B cell (primary cell): ENCODE measurements at regions of chr3 and their contacts with region 1.

Region 1: GRCh38 chr3:39051647-39052561 is at the starts of genes SCN11A and WDR48:
- DNase-seq: peak; percentile 94
- ATAC-seq: peak; percentile 94
- H3K4me3 ChIP-seq: peak within 1 kb of the TSS; percentile 72 to 93 (median 87)
- H3K4me3 Mint-ChIP-seq: peak within 1 kb of the TSS; percentile 97
- H3K27ac ChIP-seq: peak within 1 kb of the TSS; percentile 87 to 98
- H3K27ac Mint-ChIP-seq: peak within 1 kb of the TSS; percentile 98
- H3K4me1 ChIP-seq: peaks cover 11 to 15% of the 10 kb centered on the region in 2 donors
- H3K4me1 Mint-ChIP-seq: peaks cover 44% of the 10 kb centered on the region
- H3K27me3 ChIP-seq: no peaks in the 10 kb centered on the region
- H3K27me3 Mint-ChIP-seq: no peaks in the 10 kb centered on the region
- CTCF ChIP-seq: no peak
- total RNA-seq, gene SCN11A: 0.24 and 0.25 TPM in 2 replicates
- total RNA-seq, gene WDR48: 67.6 and 68.6 TPM in 2 replicates

Region 2: DNA sequence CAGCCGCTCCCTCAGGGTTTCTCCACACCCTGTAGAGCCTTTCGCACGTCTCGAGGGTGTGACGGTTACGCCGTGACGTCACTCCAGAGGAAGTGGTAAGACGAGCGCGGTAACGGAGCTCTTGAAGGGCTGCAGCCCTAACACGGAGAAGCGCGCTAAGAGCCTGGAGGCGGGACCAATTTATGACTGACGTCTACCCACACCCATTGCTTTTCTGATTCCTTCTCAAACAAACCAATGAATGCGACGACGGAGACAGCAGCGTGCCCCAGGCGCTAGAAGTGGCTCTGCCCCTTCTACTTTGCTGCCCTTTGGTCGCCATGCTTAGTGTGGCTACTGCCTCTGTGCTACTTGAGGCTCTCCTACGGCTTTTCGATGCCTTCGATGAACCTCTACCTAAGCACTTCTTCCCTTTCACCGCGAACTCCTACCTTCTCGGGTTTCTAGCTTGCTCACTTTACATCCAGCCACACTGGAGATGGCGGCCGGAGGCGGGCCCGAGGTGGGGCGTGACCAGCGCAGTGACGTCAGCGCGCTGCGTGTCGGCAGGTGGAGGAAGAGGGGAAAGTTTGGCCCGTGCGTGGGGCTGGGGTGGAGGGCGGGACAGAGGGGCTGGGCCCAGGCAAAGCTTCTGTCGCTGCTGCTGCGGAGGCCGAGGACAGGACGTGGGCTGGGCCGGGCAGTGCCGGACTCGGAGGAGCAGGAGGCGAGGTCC is 886.8 kb before region 1 on chr3 and contains the start of gene OXSR1:
- CTCF ChIA-PET with region 1: no interaction called
- POLR2A ChIA-PET with region 1: interaction called, 3 read pairs
- intact Hi-C with region 1: loop called (anchors 10 kb)
- DNase-seq: peak; percentile 99
- ATAC-seq: peak; percentile 89
- H3K4me3 ChIP-seq: peak within 1 kb of the TSS; percentile 64 to 97 (median 85)
- H3K4me3 Mint-ChIP-seq: peak within 1 kb of the TSS; percentile 94
- H3K27ac ChIP-seq: peak within 1 kb of the TSS; percentile 98 to 100
- H3K27ac Mint-ChIP-seq: peak within 1 kb of the TSS; percentile 100
- H3K4me1 ChIP-seq: peaks cover 21 to 28% of the 10 kb centered on the region in 2 donors
- H3K4me1 Mint-ChIP-seq: peaks cover 50% of the 10 kb centered on the region
- H3K27me3 ChIP-seq: no peaks in the 10 kb centered on the region
- H3K27me3 Mint-ChIP-seq: no peaks in the 10 kb centered on the region
- CTCF ChIP-seq: no peak
- total RNA-seq, gene OXSR1: 37.9 and 41.5 TPM in 2 replicates

Region 3: DNA sequence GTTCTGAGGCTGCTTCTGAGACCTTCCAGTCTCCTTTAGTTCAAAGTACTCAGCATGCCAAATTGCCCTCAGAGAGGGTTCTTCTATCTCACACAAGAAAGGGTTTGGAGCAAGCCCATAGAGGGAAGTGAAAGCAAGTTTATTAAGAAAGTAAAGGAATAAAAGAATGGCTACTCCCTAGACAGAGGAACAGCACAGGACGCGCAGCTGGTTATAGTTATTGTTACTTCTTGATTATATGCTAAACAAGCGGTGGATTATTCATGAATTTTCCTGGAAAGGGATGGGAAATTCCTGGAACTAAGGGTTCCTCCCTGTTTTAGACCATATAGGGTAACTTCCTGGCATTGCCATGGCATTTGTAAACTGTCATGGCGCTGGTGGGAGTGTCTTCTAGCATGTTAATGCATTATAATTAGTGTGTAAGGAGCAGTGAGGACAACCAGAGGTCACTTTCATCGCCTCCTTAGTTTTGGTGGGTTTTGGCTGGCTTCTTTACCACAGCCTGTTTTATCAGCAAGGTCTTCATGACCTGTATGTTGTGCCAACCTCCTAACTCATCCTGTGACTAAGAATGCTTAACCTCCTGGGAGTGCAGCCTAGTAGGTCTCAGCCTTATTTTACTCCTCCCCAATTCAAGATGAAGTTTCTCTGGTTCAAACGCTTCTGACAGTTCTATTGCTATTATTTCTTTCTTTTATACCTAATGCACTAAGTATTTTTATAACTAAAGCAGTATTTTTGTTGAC is 26.5 kb before region 1 on chr3:
- CTCF ChIA-PET with region 1: no interaction called
- POLR2A ChIA-PET with region 1: no interaction called
- intact Hi-C with region 1: no loop called
- DNase-seq: no peak
- ATAC-seq: no peak
- H3K4me3 ChIP-seq: no peak overlapping the region
- H3K4me3 Mint-ChIP-seq: no peak overlapping the region
- H3K27ac ChIP-seq: no peak overlapping the region
- H3K27ac Mint-ChIP-seq: no peak overlapping the region
- H3K4me1 ChIP-seq: no peaks in the 10 kb centered on the region
- H3K4me1 Mint-ChIP-seq: no peaks in the 10 kb centered on the region
- H3K27me3 ChIP-seq: no peaks in the 10 kb centered on the region
- H3K27me3 Mint-ChIP-seq: peaks cover 12% of the 10 kb centered on the region
- CTCF ChIP-seq: no peak

Region 4: DNA sequence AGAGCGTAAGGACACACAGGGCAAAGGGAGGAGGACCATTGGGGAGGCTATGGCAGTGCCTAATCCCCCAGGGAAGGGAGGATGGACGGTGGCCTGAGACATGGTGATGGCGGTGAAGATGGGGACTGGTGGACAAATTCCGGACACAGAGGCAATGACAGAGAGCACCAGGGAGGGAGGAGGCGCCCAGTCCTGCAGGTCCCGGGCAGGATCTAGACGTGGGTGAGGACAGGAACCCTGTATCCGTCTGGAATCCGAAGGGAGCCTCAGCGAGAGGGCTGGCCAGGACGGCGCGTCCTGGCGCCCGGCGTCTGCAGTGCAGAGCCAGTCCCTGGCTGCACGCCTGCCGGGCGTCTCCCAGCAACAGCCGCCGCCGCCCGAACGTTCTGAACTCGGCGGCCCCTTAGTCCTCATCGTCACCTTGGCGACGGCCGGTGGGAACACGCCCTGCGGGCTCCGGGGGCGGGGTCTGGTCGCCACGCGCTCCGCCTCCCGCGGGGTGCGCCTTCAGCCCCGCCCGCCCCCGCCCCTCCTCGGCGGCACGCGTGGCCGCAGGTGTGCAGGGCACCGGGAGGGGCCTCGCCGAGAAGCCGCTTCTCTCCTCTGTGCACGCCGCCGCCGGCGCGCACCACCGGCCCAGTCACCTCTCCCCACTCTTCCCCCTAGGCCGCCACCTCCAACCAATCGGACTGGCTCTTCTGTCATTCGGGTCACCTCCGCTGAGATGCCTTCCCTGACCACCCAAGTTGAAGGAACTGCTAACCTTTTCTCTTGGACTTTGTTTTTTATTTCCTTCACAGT is 128.8 kb after region 1 on chr3:
- CTCF ChIA-PET with region 1: no interaction called
- POLR2A ChIA-PET with region 1: no interaction called
- intact Hi-C with region 1: loop called (anchors 1 kb)
- DNase-seq: peak; percentile 95
- ATAC-seq: peak; percentile 85
- H3K4me3 ChIP-seq: peak overlapping the region; percentile 6 to 51 (median 37)
- H3K4me3 Mint-ChIP-seq: peak overlapping the region; percentile 82
- H3K27ac ChIP-seq: peak overlapping the region; percentile 9 to 47
- H3K27ac Mint-ChIP-seq: peak overlapping the region; percentile 72
- H3K4me1 ChIP-seq: peaks cover 23 to 35% of the 10 kb centered on the region in 2 donors
- H3K4me1 Mint-ChIP-seq: peaks cover 32% of the 10 kb centered on the region
- H3K27me3 ChIP-seq: no peaks in the 10 kb centered on the region
- H3K27me3 Mint-ChIP-seq: no peaks in the 10 kb centered on the region
- CTCF ChIP-seq: no peak

Region 5: GRCh38 chr3:39383045-39383880 is 331.4 kb after region 1 on chr3 and contains the start of gene SLC25A38:
- CTCF ChIA-PET with region 1: no interaction called
- POLR2A ChIA-PET with region 1: interaction called, 6 read pairs
- intact Hi-C with region 1: loop called (anchors 2 kb)
- DNase-seq: peak; percentile 93
- ATAC-seq: peak; percentile 71
- H3K4me3 ChIP-seq: peak within 1 kb of the TSS; percentile 4 to 91 (median 83)
- H3K4me3 Mint-ChIP-seq: peak within 1 kb of the TSS; percentile 98
- H3K27ac ChIP-seq: peak within 1 kb of the TSS; percentile 94 to 96
- H3K27ac Mint-ChIP-seq: peak within 1 kb of the TSS; percentile 99
- H3K4me1 ChIP-seq: peaks cover 43 to 50% of the 10 kb centered on the region in 2 donors
- H3K4me1 Mint-ChIP-seq: peaks cover 42% of the 10 kb centered on the region
- H3K27me3 ChIP-seq: no peaks in the 10 kb centered on the region
- H3K27me3 Mint-ChIP-seq: no peaks in the 10 kb centered on the region
- CTCF ChIP-seq: peak; percentile 60
- total RNA-seq, gene SLC25A38: 46.3 and 53.0 TPM in 2 replicates

Region 6: DNA sequence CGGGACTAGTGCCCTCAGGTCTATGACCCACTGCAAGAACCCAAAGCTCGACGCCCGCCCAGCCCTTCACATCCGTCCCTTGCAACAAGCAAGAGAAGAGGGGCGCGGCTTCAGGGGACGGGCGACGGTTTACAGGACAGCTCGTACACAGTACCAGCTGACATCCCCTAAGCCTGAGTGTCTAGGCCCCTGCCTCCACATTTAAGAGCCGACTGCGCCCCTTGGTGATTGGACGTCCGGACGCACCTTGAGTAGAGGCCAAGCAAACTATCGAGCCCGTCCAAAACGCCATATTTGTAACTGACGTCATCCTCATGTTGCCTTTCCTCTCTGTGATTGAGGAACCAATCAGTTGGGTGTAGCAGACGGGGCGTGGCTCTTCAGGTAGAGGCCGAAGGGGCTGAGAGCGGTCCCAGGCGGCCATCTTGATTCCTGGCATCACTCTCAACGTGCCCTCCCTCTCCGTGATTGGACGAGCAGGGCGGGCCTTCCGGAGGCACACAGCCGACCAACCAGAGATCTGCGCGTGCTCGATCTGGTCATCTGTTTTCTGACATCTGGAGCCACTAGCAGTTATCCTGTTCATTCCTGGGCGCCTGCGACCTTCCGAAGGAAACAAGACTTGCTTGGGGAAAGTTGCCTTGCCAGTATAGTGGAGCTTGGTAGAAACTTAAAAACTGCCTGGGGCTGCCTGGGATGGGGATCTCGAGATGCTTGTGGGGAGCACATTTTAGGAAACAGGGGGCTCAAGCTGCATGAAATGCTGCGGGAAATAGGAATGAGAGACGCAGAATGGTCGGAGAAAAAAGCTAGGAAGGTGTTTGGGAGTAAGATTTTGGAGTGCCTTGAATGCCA is 1401.2 kb after region 1 on chr3:
- CTCF ChIA-PET with region 1: no interaction called
- POLR2A ChIA-PET with region 1: no interaction called
- intact Hi-C with region 1: loop called (anchors 5 kb)
- DNase-seq: peak; percentile 97
- ATAC-seq: peak; percentile 90
- H3K4me3 ChIP-seq: peak overlapping the region; percentile 60 to 88 (median 77)
- H3K4me3 Mint-ChIP-seq: peak overlapping the region; percentile 96
- H3K27ac ChIP-seq: peak overlapping the region; percentile 92 to 95
- H3K27ac Mint-ChIP-seq: peak overlapping the region; percentile 99
- H3K4me1 ChIP-seq: peaks cover 24 to 28% of the 10 kb centered on the region in 2 donors
- H3K4me1 Mint-ChIP-seq: peaks cover 36% of the 10 kb centered on the region
- H3K27me3 ChIP-seq: no peaks in the 10 kb centered on the region
- H3K27me3 Mint-ChIP-seq: no peaks in the 10 kb centered on the region
- CTCF ChIP-seq: peak; percentile 6